HepG2 (cell line): ENCODE measurements at regions of chr10 and their contacts with region 1.

Region 1: DNA sequence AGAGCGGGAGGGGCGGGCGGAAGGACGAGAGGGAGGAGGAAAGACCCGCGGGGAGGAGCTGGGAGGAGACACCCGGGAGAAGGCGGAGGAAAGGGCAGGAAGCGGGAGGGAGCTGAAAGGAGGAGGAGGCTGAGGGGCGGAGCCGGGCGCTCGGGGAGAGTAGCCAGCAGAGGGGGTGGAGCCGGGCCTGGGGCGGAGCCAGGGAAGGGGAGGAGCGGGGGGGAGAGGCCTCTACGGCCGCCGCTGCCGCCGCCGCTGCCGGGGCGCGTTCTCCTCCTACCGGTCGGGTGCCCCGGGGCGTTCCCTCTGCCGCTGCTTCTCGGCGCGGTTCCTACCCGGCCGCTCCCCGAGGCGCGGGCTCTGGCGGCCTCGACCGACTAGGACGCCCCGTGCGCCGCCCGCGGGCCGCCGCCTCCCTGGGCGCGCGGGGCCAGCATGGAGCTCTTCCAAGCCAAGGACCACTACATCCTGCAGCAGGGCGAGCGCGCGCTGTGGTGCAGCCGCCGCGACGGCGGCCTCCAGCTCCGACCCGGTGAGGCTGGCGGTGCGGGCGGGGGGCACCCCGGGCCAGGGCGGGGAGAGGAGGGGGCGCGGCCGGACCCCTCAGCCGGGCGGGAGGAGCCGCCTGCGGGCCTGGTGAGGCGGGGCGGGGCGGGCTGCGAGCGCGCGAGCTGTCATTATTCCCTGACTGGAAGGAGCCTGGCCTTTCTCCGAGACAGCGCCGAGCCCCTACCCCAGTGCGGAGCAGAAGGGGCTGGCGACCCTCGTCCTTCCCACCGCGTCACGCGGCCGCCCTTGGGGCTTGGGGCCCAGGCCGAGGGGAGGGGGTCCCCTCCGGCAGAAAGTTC is at the start of gene INPP5F:
- DNase-seq: peak; percentile 95
- ATAC-seq: peak; percentile 85; the same call in 2 of the 3 replicates
- H3K4me3 ChIP-seq: peak within 1 kb of the TSS; percentile 86 to 97 (median 88)
- H3K27ac ChIP-seq: peak within 1 kb of the TSS; percentile 95
- H3K4me1 ChIP-seq: peaks cover 50% of the 10 kb centered on the region
- H3K27me3 ChIP-seq: no peaks in the 10 kb centered on the region; a peak in 1 of 5 replicates
- CTCF ChIP-seq: 0 out of 2 replicates have a peak, but pooled peaks have one; percentile 14
- EP300 ChIP-seq: peak in 1 of 2 experiments; percentile 12; a peak in 1 of 4 replicates
- POLR2A ChIP-seq: no peak
- RAD21 ChIP-seq: peak; percentile 57
- total RNA-seq, gene INPP5F: 15.7 and 16.4 TPM in 2 replicates

Region 2: DNA sequence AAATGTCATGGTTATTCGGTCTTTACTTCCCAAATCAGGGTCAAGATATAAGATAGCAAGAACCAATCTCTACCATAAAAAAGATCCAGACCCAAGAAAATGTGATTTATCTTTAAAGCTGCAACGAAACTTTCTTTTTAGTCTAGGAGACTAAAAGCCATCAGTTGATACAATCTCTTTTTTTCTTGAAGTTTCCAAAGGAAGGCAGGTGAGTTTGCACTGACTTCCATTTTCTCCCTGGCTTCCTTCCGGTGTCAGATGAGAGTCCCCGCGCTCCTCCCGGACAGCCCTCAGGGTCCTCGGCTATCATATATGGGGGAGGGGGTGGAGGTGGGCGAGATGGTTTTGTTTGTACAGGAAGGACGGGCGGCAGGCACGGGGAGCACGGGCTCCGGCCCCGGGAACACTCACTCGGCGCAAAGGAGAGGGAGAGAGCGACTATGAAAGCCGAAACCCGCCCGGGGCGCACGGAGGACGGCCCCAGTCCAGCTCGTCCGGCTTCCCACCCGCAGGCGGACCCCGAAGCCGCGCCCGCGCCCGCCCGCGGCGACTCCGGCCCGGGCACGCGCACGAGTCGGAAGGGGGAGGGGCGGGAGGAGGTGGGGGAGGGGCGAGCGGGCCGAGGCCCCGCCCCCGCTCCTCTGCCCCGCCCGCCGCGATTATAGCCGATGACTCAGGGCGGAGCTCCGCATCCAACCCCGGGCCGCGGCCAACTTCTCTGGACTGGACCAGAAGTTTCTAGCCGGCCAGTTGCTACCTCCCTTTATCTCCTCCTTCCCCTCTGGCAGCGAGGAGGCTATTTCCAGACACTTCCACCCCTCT is 75.1 kb before region 1 on chr10 and contains the start of gene BAG3:
- CTCF ChIA-PET with region 1: no interaction called
- POLR2A ChIA-PET with region 1: interaction called, 13 read pairs
- in situ Hi-C with region 1: no loop called
- intact Hi-C with region 1: no loop called
- DNase-seq: peak; percentile 69
- ATAC-seq: peak; percentile 88
- H3K4me3 ChIP-seq: peak within 1 kb of the TSS; percentile 89 to 98 (median 96)
- H3K27ac ChIP-seq: peak within 1 kb of the TSS; percentile 81
- H3K4me1 ChIP-seq: peaks cover 51% of the 10 kb centered on the region
- H3K27me3 ChIP-seq: no peaks in the 10 kb centered on the region
- CTCF ChIP-seq: no peak; the same call in 1 of the 2 replicates
- EP300 ChIP-seq: 0 out of 4 replicates have a peak, but pooled peaks of 1 of the 2 experiments have one; percentile 15
- POLR2A ChIP-seq: peak; percentile 93 to 94
- RAD21 ChIP-seq: no peak
- total RNA-seq, gene BAG3: 6.7 and 7.9 TPM in 2 replicates

Region 3: DNA sequence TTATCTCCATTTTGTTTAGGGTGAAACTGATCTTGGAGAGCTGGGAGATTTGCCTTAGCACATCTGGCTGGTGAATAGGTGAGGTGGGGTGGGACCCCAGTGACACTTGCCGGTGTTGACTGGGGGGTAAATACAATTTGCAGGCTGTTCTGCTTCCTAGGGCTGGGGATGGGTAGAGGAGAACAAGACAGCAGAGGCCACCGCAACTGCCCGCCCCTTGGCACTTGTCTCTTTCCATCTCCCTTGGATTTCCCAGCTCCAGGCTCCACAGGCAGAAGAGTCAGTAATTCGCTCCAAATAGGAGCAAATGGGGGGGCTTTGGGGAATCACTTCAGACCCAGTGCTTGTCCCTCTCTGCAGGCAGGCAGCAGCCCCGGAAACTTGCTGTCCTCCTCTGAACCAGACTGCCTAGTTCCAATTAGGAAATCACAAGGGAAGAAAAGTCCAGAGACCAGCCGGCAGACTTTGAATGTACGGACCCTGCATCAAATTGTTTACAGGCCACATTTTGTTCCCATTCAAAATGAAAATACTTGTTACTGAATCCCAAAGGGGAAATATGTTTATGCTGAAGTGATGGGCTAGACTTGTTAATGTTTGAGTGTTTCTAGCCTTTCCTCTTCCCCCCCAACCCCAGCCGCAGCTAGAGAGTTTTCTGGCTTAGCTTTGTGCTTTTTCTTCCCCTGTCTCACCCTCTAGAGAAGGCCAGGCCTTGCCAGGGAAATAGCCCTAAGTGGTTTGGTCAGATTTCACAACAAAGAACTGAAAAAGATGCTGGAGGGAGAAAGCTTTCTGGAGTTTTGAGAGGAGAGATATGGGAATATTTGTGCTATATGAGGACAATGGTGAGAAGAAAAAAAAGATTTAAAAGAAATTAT is 10.2 kb before region 1 on chr10:
- CTCF ChIA-PET with region 1: no interaction called
- POLR2A ChIA-PET with region 1: interaction called, 14 read pairs
- in situ Hi-C with region 1: no loop called
- intact Hi-C with region 1: no loop called
- DNase-seq: peak; percentile 38
- ATAC-seq: peak; percentile 89
- H3K4me3 ChIP-seq: peak overlapping the region; percentile 4 to 49 (median 48); a peak in 4 of 6 replicates
- H3K27ac ChIP-seq: peak overlapping the region; percentile 71
- H3K4me1 ChIP-seq: peaks cover 25% of the 10 kb centered on the region
- H3K27me3 ChIP-seq: no peaks in the 10 kb centered on the region
- CTCF ChIP-seq: no peak
- EP300 ChIP-seq: no peak
- POLR2A ChIP-seq: no peak
- RAD21 ChIP-seq: no peak

Region 4: GRCh38 chr10:119742947-119743648 is 17.0 kb after region 1 on chr10:
- CTCF ChIA-PET with region 1: no interaction called
- POLR2A ChIA-PET with region 1: interaction called, 30 read pairs
- in situ Hi-C with region 1: no loop called
- intact Hi-C with region 1: no loop called
- DNase-seq: no peak
- ATAC-seq: peak; percentile 100
- H3K4me3 ChIP-seq: peak overlapping the region; percentile 45 to 61 (median 52)
- H3K27ac ChIP-seq: peak overlapping the region; percentile 95
- H3K4me1 ChIP-seq: peaks cover 69% of the 10 kb centered on the region
- H3K27me3 ChIP-seq: no peaks in the 10 kb centered on the region
- CTCF ChIP-seq: no peak
- EP300 ChIP-seq: peak in 1 of 2 experiments; percentile 51; a peak in 1 of 4 replicates
- POLR2A ChIP-seq: peak; percentile 61 to 63; a peak in 2 of 4 replicates
- RAD21 ChIP-seq: 0 out of 2 replicates have a peak, but pooled peaks have one; percentile 10